ENCODE measurements at regions of chr1 and their contacts with region 1.

Region 1: GRCh38 chr1:203475012-203475981 is at the start of gene PRELP:
- DNase-seq: no peak
- H3K4me3 Mint-ChIP-seq: no peak within 1 kb of the TSS
- H3K27ac Mint-ChIP-seq: no peak within 1 kb of the TSS
- H3K4me1 Mint-ChIP-seq: no peaks in the 10 kb centered on the region
- H3K27me3 Mint-ChIP-seq: peaks cover 9% of the 10 kb centered on the region
- total RNA-seq, gene PRELP: not detected

Region 2: DNA sequence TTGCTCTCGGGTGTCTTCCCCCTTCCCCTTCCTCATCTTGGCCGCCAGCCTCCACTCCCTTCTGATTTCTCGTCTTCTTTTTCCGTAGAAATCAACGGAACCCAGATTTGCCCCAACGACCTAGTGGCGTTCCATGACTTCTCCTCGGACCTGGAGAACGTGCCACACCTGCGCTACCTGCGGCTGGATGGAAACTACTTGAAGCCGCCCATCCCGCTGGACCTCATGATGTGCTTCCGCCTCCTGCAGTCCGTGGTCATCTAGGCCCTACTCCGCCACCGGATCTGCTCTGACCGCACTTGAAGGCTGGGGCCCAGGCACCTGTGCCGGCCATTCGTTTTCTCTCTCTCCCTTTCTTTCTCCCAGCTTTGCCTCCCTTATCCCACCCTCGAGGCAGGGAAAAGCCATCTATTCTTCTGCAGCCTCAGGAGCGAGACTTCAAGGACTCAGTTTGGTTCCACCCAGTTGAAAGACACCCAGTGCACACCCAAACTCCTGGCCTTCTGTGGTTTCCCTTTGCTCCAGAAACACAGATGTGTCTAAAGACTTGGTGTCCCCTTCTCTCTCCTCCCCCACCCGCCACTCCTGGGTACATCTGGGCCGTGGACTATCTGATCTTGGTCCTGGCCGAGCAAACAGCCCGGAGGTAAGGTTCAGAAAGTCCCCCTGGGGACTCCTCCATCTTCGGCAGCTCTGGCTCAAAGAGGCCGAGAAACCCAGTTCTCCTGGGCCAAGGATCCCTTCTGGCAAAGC is 11.5 kb after region 1 on chr1:
- CTCF ChIA-PET with region 1: interaction called, 21 read pairs
- POLR2A ChIA-PET with region 1: no interaction called
- DNase-seq: no peak
- H3K4me3 Mint-ChIP-seq: peak overlapping the region; percentile 51
- H3K27ac Mint-ChIP-seq: no peak overlapping the region
- H3K4me1 Mint-ChIP-seq: peaks cover 8% of the 10 kb centered on the region
- H3K27me3 Mint-ChIP-seq: no peaks in the 10 kb centered on the region

Region 3: GRCh38 chr1:203558064-203558760 is 82.9 kb after region 1 on chr1:
- CTCF ChIA-PET with region 1: no interaction called
- POLR2A ChIA-PET with region 1: no interaction called
- DNase-seq: no peak
- H3K4me3 Mint-ChIP-seq: no peak overlapping the region
- H3K27ac Mint-ChIP-seq: no peak overlapping the region
- H3K4me1 Mint-ChIP-seq: peaks cover 3% of the 10 kb centered on the region
- H3K27me3 Mint-ChIP-seq: peaks cover 11% of the 10 kb centered on the region

Measured in activated CD4-positive, alpha-beta T cell treated with anti-CD3 and anti-CD28 coated beads, Interleukin-2, amount 10 ng/mL, durations not matched to agents 7 days and 5 days (primary cell).